ENCODE measurements at regions of chr7 and their contacts with region 1.

Region 1: GRCh38 chr7:80392229-80393169 is 119.4 kb downstream of the GNAT3 start:
- ATAC-seq: peak in 4 of 8 experiments; percentile 25 to 42 (median 32)
- H3K4me3 ChIP-seq: no peak overlapping the region
- H3K27ac ChIP-seq: no peak overlapping the region
- H3K4me1 ChIP-seq: no peaks in the 10 kb centered on the region

Region 2: GRCh38 chr7:78489476-78490240 is 1902.8 kb before region 1 on chr7:
- in situ Hi-C with region 1: no loop called
- ATAC-seq: peak in 2 of 8 experiments; percentile 18 to 42
- H3K4me3 ChIP-seq: peak overlapping the region in 1 of 5 donors; percentile 14
- H3K27ac ChIP-seq: peak overlapping the region in 1 of 2 donors; percentile 35
- H3K4me1 ChIP-seq: peaks cover 15 to 24% of the 10 kb centered on the region in 2 donors

Region 3: DNA sequence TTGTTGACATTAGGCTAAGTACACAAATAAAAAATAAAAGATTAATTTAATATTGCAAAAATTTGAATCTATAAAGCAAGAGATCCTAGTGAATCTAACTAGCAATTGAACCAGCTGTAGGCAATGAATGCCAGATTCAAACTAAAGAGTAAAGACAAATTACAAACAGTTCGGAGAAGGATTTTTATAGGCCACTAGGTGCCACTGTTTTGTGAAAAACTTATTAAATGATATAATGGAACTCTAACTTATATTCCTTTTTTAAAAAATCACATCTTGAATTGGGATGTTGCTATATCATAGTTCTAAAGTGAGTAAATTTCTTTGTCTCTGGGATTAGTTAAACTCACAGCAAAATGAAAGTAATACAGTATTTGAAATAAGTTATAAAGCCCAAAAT is 297.0 kb before region 1 on chr7:
- in situ Hi-C with region 1: loop called in 1 of 9 experiments (anchors 25 kb)
- ATAC-seq: peak in 1 of 8 experiments; percentile 25
- H3K4me3 ChIP-seq: no peak overlapping the region
- H3K27ac ChIP-seq: no peak overlapping the region
- H3K4me1 ChIP-seq: no peaks in the 10 kb centered on the region

Region 4: GRCh38 chr7:80134536-80135320 is 257.8 kb before region 1 on chr7 and contains the start of gene GNAI1:
- in situ Hi-C with region 1: loop called in 3 of 9 experiments (anchors 25 kb)
- ATAC-seq: peak; percentile 73 to 88 (median 84)
- H3K4me3 ChIP-seq: peak within 1 kb of the TSS; percentile 71 to 98 (median 87)
- H3K27ac ChIP-seq: peak within 1 kb of the TSS; percentile 69 to 80
- H3K4me1 ChIP-seq: peaks cover 11 to 14% of the 10 kb centered on the region in 2 donors
- total RNA-seq, gene GNAI1: 29.8 to 89.5 (median 33.4) TPM

Region 5: GRCh38 chr7:80558116-80558515 is 165.6 kb after region 1 on chr7:
- in situ Hi-C with region 1: no loop called
- ATAC-seq: no peak
- H3K4me3 ChIP-seq: no peak overlapping the region
- H3K27ac ChIP-seq: no peak overlapping the region
- H3K4me1 ChIP-seq: no peaks in the 10 kb centered on the region